H1 (cell line): ENCODE measurements at regions of chr1 and their contacts with region 1.

Region 1: GRCh38 chr1:25997828-25998761 is at the start of gene PAFAH2:
- DNase-seq: peak; percentile 95 to 97
- H3K4me3 ChIP-seq: peak within 1 kb of the TSS; percentile 42 to 86 (median 80)
- H3K27ac ChIP-seq: peak within 1 kb of the TSS; percentile 57; the same call in 1 of the 2 replicates
- H3K4me1 ChIP-seq: peaks cover 2 to 14% (median 8%) of the 10 kb centered on the region in 4 experiments; a peak in 6 of 7 replicates
- H3K27me3 ChIP-seq: no peaks in the 10 kb centered on the region; a peak in 2 of 7 replicates
- CTCF ChIP-seq: peak; percentile 95 to 98 (median 98)
- EP300 ChIP-seq: peak in 1 of 2 experiments; percentile 92; a peak in 1 of 3 replicates
- POLR2A ChIP-seq: no peak; a peak in 1 of 3 replicates
- RAD21 ChIP-seq: peak; percentile 98 to 99
- total RNA-seq, gene PAFAH2: 7.6 and 9.3 TPM in 2 replicates

Region 2: DNA sequence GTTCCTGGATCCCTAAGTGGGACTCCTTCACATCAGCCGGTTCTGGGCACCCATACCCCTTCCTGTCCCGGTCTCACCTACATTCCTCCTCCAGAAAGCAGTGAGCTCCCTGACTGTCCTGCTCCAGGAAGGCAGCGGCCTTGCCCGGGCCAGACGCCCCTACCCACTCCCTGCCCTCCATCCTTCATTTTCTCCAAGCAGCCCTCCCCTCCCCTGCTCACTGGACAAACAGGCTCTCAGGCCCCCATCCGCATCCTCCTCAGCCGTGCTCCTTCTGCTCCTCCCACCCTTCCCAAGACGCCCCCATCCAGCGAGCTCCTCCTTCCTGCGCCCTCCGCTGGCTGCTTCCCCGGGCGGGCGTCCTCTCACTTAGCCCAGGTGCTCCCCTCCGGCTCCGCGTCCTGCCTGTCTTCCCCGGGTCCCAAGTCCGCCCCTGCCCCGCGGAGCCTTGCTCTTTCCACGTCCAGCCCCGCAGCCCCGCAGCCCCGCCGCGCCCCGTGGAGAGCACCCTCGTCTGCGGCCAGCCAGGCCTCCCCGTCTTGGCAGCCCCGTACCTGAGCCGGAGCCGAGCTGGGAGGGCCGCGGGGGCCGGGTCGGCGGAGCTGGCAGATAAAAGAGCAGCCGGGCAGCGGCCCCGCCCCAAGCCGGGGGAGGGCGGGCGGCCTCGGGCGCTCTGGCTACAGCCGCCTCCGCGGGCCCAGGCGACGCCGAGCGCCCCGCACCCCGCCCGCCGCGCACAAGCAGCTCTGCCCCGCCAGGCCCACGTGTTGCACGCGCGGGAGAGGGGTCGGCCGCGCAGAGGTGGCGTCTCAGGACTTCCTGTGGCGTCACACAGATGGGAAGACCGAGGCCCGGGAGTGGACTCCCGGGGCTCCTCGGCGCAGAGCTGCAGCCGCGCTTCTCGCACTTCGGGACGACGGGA is 122.9 kb before region 1 on chr1 and contains the start of gene PAQR7:
- CTCF ChIA-PET with region 1: interaction called, 10 read pairs
- POLR2A ChIA-PET with region 1: interaction called, 7 read pairs
- DNase-seq: peak in 1 of 2 experiments; percentile 86
- H3K4me3 ChIP-seq: peak within 1 kb of the TSS; percentile 26 to 69 (median 48)
- H3K27ac ChIP-seq: 0 out of 2 replicates have a peak within 1 kb of the TSS, but pooled peaks have one; percentile 8
- H3K4me1 ChIP-seq: peaks cover 0 to 13% (median 11%) of the 10 kb centered on the region in 4 experiments; a peak in 5 of 7 replicates
- H3K27me3 ChIP-seq: peaks cover 0 to 3% (median 1%) of the 10 kb centered on the region in 4 experiments; a peak in 4 of 7 replicates
- CTCF ChIP-seq: peak in 1 of 3 experiments; percentile 4; a peak in 1 of 4 replicates
- EP300 ChIP-seq: no peak
- POLR2A ChIP-seq: peak in 1 of 2 experiments; percentile 48; a peak in 1 of 3 replicates
- RAD21 ChIP-seq: no peak
- total RNA-seq, gene PAQR7: 7.3 and 7.7 TPM in 2 replicates

Region 3: DNA sequence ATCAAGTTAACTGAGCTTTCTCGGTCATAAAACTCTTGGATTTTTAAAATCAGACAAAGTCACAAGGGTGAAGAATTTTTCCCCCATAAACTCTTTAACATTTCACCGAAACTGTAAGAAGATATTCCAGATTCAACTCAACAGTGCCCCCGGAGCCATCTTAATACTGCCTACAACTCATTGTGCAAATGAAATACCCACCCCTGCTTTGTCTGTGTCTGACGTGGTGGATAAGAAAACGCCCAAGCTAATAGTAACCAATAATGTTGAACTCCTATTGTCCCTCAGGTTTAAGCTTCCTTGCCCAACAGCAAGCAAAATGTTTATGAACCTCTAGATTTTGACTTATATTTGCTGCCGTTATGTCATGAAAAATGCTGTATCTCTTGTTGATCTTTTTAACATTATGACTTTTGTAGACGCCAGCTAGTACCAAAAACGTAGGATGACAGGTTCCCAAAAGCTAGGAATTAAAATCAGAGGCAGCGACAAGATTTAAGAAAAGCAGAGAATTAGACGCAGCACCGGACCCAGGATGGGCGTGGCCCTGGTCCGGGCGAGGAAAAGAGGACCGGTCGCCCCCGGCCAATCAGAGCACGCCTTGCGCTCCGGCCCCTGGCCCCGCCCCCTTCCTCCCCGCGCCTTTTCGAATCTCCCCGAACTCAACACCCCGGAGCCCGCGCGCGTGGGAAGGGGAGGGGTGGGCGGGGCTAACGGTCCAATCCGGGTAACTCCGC is 93.0 kb before region 1 on chr1:
- CTCF ChIA-PET with region 1: interaction called, 330 read pairs
- POLR2A ChIA-PET with region 1: interaction called, 17 read pairs
- DNase-seq: peak; percentile 73 to 94
- H3K4me3 ChIP-seq: peak overlapping the region; percentile 76 to 100 (median 93)
- H3K27ac ChIP-seq: peak overlapping the region; percentile 24; the same call in 1 of the 2 replicates
- H3K4me1 ChIP-seq: peaks cover 5 to 11% (median 8%) of the 10 kb centered on the region in 4 experiments; a peak in 6 of 7 replicates
- H3K27me3 ChIP-seq: no peaks in the 10 kb centered on the region
- CTCF ChIP-seq: 0 out of 4 replicates have a peak, but pooled peaks of 1 of the 3 experiments have one; percentile 2
- EP300 ChIP-seq: no peak
- POLR2A ChIP-seq: no peak
- RAD21 ChIP-seq: no peak

Region 4: GRCh38 chr1:25922056-25922969 is 75.8 kb before region 1 on chr1:
- CTCF ChIA-PET with region 1: interaction called, 10 read pairs
- POLR2A ChIA-PET with region 1: interaction called, 7 read pairs
- DNase-seq: no peak
- H3K4me3 ChIP-seq: peak overlapping the region; percentile 46 to 69 (median 58)
- H3K27ac ChIP-seq: no peak overlapping the region
- H3K4me1 ChIP-seq: peaks cover 6 to 20% (median 13%) of the 10 kb centered on the region in 4 experiments
- H3K27me3 ChIP-seq: peaks cover 0 to 6% (median 2%) of the 10 kb centered on the region in 4 experiments; a peak in 4 of 7 replicates
- CTCF ChIP-seq: no peak
- EP300 ChIP-seq: no peak
- POLR2A ChIP-seq: peak in 1 of 2 experiments; percentile 15; a peak in 1 of 3 replicates
- RAD21 ChIP-seq: no peak

Region 5: GRCh38 chr1:25987951-25988350 is 10.1 kb before region 1 on chr1:
- CTCF ChIA-PET with region 1: interaction called, 13 read pairs
- POLR2A ChIA-PET with region 1: interaction called, 7 read pairs
- DNase-seq: no peak
- H3K4me3 ChIP-seq: no peak overlapping the region
- H3K27ac ChIP-seq: no peak overlapping the region
- H3K4me1 ChIP-seq: peaks cover 0 to 3% (median 0%) of the 10 kb centered on the region in 4 experiments; a peak in 2 of 7 replicates
- H3K27me3 ChIP-seq: no peaks in the 10 kb centered on the region; a peak in 1 of 7 replicates
- CTCF ChIP-seq: no peak
- EP300 ChIP-seq: no peak
- POLR2A ChIP-seq: no peak
- RAD21 ChIP-seq: no peak

Region 6: GRCh38 chr1:26009796-26010460 is 11.8 kb after region 1 on chr1:
- CTCF ChIA-PET with region 1: interaction called, 18 read pairs
- POLR2A ChIA-PET with region 1: interaction called, 4 read pairs
- DNase-seq: peak; percentile 25 to 62
- H3K4me3 ChIP-seq: no peak overlapping the region
- H3K27ac ChIP-seq: no peak overlapping the region
- H3K4me1 ChIP-seq: peaks cover 0 to 5% (median 3%) of the 10 kb centered on the region in 4 experiments; a peak in 6 of 7 replicates
- H3K27me3 ChIP-seq: no peaks in the 10 kb centered on the region
- CTCF ChIP-seq: peak; percentile 36 to 63 (median 58)
- EP300 ChIP-seq: no peak
- POLR2A ChIP-seq: no peak
- RAD21 ChIP-seq: peak; percentile 52 to 57

Region 7: DNA sequence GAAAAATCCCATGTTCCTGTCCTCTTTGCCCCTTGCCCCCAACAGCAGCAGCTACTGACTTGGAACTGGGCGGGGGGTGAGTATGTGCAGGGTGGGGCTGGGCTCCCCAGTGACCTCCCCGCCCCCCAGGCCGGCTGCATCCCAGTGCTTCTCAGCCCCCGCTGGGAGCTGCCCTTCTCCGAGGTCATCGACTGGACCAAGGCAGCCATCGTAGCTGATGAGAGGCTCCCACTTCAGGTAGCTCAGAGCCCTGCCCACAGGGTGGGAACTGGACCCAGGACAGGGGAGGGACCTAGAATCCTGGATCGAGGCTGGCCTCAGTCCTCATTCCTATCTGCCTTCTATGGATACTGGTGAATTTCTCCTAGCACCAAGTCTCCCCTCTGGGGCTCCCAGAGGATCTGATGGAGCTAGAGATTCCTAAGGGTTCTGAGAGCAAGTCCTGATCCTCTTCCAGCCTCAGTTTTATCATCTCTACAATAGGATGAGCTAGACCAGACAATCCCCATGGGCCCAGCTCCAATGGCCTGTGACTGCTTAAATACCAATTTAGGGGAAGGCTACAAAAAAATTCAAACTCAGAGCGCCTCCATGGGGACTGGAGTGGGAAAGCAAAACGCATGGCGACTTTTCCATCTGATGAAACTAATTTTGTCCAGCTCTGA is 31.5 kb after region 1 on chr1:
- CTCF ChIA-PET with region 1: interaction called, 11 read pairs
- POLR2A ChIA-PET with region 1: interaction called, 4 read pairs
- DNase-seq: no peak
- H3K4me3 ChIP-seq: no peak overlapping the region
- H3K27ac ChIP-seq: no peak overlapping the region
- H3K4me1 ChIP-seq: peaks cover 0 to 4% (median 2%) of the 10 kb centered on the region in 4 experiments; a peak in 3 of 7 replicates
- H3K27me3 ChIP-seq: peaks cover 3 to 15% (median 13%) of the 10 kb centered on the region in 4 experiments; a peak in 6 of 7 replicates
- CTCF ChIP-seq: peak; percentile 29 to 56 (median 55)
- EP300 ChIP-seq: no peak
- POLR2A ChIP-seq: no peak
- RAD21 ChIP-seq: peak; percentile 56 to 74

Region 8: GRCh38 chr1:26066857-26067256 is 68.8 kb after region 1 on chr1:
- CTCF ChIA-PET with region 1: no interaction called
- POLR2A ChIA-PET with region 1: no interaction called
- DNase-seq: no peak
- H3K4me3 ChIP-seq: no peak overlapping the region
- H3K27ac ChIP-seq: no peak overlapping the region
- H3K4me1 ChIP-seq: peaks cover 0 to 2% (median 0%) of the 10 kb centered on the region in 4 experiments; a peak in 1 of 7 replicates
- H3K27me3 ChIP-seq: no peaks in the 10 kb centered on the region
- CTCF ChIP-seq: no peak
- EP300 ChIP-seq: no peak
- POLR2A ChIP-seq: no peak
- RAD21 ChIP-seq: no peak

Region 9: DNA sequence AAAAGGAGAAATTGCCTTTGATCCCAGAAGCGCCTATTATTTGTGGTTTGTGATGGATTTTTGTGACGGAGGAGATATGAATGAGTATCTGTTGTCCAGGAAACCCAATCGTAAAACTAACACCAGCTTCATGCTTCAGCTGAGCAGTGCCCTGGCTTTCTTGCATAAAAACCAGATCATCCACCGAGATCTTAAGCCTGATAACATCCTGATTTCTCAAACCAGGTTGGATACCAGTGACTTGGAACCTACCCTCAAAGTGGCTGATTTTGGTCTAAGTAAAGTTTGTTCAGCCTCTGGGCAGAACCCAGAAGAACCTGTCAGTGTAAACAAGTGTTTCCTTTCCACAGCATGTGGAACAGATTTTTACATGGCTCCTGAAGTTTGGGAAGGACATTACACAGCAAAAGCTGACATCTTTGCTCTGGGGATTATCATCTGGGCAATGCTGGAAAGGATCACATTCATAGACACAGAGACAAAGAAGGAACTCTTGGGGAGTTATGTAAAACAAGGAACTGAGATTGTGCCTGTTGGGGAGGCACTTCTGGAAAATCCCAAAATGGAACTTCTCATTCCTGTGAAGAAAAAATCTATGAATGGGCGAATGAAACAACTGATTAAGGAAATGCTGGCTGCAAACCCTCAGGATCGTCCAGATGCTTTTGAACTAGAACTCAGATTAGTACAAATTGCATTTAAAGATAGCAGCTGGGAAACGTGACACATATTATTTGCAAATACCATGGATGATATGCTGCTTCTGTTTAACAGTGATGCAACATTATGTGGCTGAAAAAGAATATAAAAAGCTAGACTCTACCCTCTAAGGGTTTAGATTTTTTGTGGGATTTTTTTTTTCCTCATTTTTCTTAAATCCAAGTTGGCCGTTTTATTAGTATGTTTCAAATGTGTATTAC is 124.0 kb after region 1 on chr1:
- CTCF ChIA-PET with region 1: no interaction called
- POLR2A ChIA-PET with region 1: no interaction called
- DNase-seq: no peak
- H3K4me3 ChIP-seq: no peak overlapping the region
- H3K27ac ChIP-seq: no peak overlapping the region
- H3K4me1 ChIP-seq: no peaks in the 10 kb centered on the region
- H3K27me3 ChIP-seq: no peaks in the 10 kb centered on the region
- CTCF ChIP-seq: no peak
- EP300 ChIP-seq: no peak
- POLR2A ChIP-seq: no peak
- RAD21 ChIP-seq: no peak